Naive thymus-derived CD8-positive, alpha-beta T cell (primary cell): ENCODE measurements at regions of chr5 and their contacts with region 1.

Region 1: GRCh38 chr5:180704368-180704869 is 35.4 kb downstream of the OR2Y1 start:
- DNase-seq: peak in 1 of 10 donors; percentile 19
- ATAC-seq: no peak
- H3K4me3 Mint-ChIP-seq: no peak overlapping the region
- H3K27ac Mint-ChIP-seq: no peak overlapping the region
- H3K4me1 Mint-ChIP-seq: peaks cover 0 to 14% (median 11%) of the 10 kb centered on the region in 4 donors
- H3K27me3 Mint-ChIP-seq: peaks cover 0 to 6% (median 0%) of the 10 kb centered on the region in 5 donors

Region 2: GRCh38 chr5:179732417-179732917 is 972.0 kb before region 1 on chr5 and contains the start of gene MAML1:
- POLR2A ChIA-PET with region 1: no interaction called
- DNase-seq: peak; percentile 95 to 100 (median 99)
- ATAC-seq: peak; percentile 94 to 95
- H3K4me3 Mint-ChIP-seq: peak within 1 kb of the TSS; percentile 77 to 96 (median 94)
- H3K27ac Mint-ChIP-seq: peak within 1 kb of the TSS; percentile 91 to 97 (median 96)
- H3K4me1 Mint-ChIP-seq: peaks cover 9 to 50% (median 39%) of the 10 kb centered on the region in 4 donors
- H3K27me3 Mint-ChIP-seq: no peaks in the 10 kb centered on the region
- polyA plus RNA-seq, gene MAML1: 2.8 to 9.6 (median 3.3) TPM

Region 3: GRCh38 chr5:180689071-180689694 is 15.2 kb before region 1 on chr5:
- POLR2A ChIA-PET with region 1: interaction called, 11 read pairs
- DNase-seq: peak; percentile 29 to 83 (median 68)
- ATAC-seq: peak; percentile 83 to 86
- H3K4me3 Mint-ChIP-seq: peak overlapping the region; percentile 75 to 86 (median 80)
- H3K27ac Mint-ChIP-seq: peak overlapping the region; percentile 76 to 100 (median 94)
- H3K4me1 Mint-ChIP-seq: peaks cover 42 to 83% (median 80%) of the 10 kb centered on the region in 4 donors
- H3K27me3 Mint-ChIP-seq: no peaks in the 10 kb centered on the region

Region 4: DNA sequence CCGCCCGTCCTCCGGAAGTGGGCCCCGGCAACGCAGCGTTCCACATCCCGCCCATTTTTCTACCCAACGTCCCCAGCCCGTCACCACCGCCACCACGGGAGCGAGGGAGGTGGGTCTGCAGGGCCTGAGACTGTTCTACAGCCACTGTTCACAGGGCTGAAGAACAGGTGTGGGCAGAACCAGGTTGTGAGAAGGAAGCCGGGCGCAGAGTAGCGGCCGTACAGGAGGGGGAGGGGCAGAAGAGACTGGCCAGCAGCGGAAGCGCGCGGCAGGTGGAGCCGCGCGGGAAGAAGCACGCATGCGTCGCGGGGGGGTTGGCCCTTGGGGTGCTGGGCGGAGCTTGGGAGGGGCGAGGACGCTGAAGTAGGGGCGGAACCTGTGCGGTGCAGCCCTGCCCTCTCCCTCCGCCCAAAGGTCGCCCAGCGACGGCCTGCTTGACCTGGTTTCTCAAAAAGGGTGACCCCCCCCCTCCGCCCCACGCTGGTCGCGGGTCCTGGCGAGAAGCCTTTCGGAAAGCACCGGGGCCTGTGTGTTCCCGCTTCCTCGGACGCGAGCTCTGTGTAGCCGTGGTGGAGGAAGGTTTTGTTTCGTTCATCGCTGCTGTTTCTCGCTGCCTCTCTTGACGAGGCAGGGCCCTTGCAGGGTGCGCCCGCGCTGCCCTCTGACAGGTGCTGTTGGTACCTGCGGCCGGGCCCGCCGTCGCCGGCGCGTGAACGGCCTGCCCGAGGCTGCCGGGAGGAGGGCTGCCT is 106.0 kb after region 1 on chr5:
- POLR2A ChIA-PET with region 1: no interaction called
- DNase-seq: peak; percentile 88 to 100 (median 96)
- ATAC-seq: peak; percentile 72 to 74
- H3K4me3 Mint-ChIP-seq: peak overlapping the region; percentile 83 to 99 (median 92)
- H3K27ac Mint-ChIP-seq: peak overlapping the region; percentile 93 to 100 (median 100)
- H3K4me1 Mint-ChIP-seq: peaks cover 47 to 84% (median 75%) of the 10 kb centered on the region in 4 donors
- H3K27me3 Mint-ChIP-seq: no peaks in the 10 kb centered on the region